Activated naive CD4-positive, alpha-beta T cell treated with anti-CD3 and anti-CD28 coated beads for 36 hours (primary cell): ENCODE measurements at regions of chr5 and their contacts with region 1.

Region 1: DNA sequence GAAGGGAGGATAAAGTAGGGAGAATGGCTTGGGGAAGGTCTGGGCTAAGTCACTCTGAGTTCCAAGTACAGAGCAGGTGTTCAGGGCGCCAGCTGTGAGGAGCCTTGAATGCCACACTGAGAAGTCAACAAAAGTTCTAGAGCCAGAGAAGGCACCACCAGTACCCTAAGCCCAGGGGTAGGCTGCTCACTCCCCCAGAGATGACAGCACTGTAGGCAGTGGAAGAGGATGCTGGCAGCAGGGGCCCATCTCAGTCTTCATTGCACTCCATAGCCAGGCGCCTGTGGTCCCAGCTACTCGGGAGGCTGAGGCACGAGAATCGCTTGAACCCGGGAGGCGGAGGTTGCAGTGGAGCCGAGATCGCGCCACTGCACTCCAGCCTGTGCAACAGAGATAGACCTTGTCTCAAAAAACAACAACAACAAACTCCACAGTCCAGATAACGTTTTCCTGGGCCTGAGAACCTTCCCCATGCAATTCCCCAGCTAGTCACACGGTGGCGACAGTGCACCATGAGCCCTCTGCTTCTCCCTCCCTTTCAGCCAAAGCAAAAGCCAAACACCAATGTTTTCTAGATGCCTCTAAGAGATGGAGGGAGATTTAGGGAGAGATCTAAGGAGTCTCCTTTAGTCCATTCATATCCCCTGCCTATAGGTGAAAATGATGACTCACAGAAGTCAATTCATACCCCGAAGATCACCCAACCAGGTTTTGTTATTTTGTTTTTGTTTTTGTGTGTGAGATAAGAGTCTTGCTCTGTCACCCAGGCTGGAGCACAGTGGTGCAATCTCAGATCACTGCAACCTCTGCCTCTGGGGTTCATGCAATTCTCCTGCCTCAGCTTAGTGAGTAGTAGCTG is 19.8 kb upstream of the NSD1 start:
- DNase-seq: peak; percentile 89
- H3K4me3 Mint-ChIP-seq: no peak overlapping the region
- H3K27ac Mint-ChIP-seq: no peak overlapping the region
- H3K4me1 Mint-ChIP-seq: peaks cover 20% of the 10 kb centered on the region
- H3K27me3 Mint-ChIP-seq: no peaks in the 10 kb centered on the region

Region 2: GRCh38 chr5:176810084-176810597 is 303.7 kb before region 1 on chr5 and contains the start of gene UNC5A:
- CTCF ChIA-PET with region 1: no interaction called
- intact Hi-C with region 1: loop called (anchors 5 kb)
- DNase-seq: peak; percentile 62
- H3K4me3 Mint-ChIP-seq: peak within 1 kb of the TSS; percentile 59
- H3K27ac Mint-ChIP-seq: no peak within 1 kb of the TSS
- H3K4me1 Mint-ChIP-seq: peaks cover 11% of the 10 kb centered on the region
- H3K27me3 Mint-ChIP-seq: peaks cover 64% of the 10 kb centered on the region
- total RNA-seq, gene UNC5A: not detected

Region 3: GRCh38 chr5:177099422-177100093 is 14.2 kb before region 1 on chr5:
- CTCF ChIA-PET with region 1: interaction called, 10 read pairs
- intact Hi-C with region 1: no loop called
- DNase-seq: no peak
- H3K4me3 Mint-ChIP-seq: no peak overlapping the region
- H3K27ac Mint-ChIP-seq: no peak overlapping the region
- H3K4me1 Mint-ChIP-seq: no peaks in the 10 kb centered on the region
- H3K27me3 Mint-ChIP-seq: no peaks in the 10 kb centered on the region

Region 4: GRCh38 chr5:177133091-177133852 is 19.5 kb after region 1 on chr5 and contains the start of gene NSD1:
- CTCF ChIA-PET with region 1: interaction called, 30 read pairs
- intact Hi-C with region 1: loop called (anchors 1 kb)
- DNase-seq: peak; percentile 90
- H3K4me3 Mint-ChIP-seq: peak within 1 kb of the TSS; percentile 88
- H3K27ac Mint-ChIP-seq: peak within 1 kb of the TSS; percentile 88
- H3K4me1 Mint-ChIP-seq: peaks cover 52% of the 10 kb centered on the region
- H3K27me3 Mint-ChIP-seq: no peaks in the 10 kb centered on the region
- total RNA-seq, gene NSD1: 50.2 to 51.7 TPM

Region 5: GRCh38 chr5:177311723-177312648 is 198.2 kb after region 1 on chr5 and contains the start of gene MXD3:
- CTCF ChIA-PET with region 1: interaction called, 34 read pairs
- intact Hi-C with region 1: no loop called
- DNase-seq: peak; percentile 99
- H3K4me3 Mint-ChIP-seq: peak within 1 kb of the TSS; percentile 97
- H3K27ac Mint-ChIP-seq: peak within 1 kb of the TSS; percentile 82
- H3K4me1 Mint-ChIP-seq: peaks cover 20% of the 10 kb centered on the region
- H3K27me3 Mint-ChIP-seq: peaks cover 3% of the 10 kb centered on the region
- total RNA-seq, gene MXD3: 45.0 to 51.7 TPM

Region 6: DNA sequence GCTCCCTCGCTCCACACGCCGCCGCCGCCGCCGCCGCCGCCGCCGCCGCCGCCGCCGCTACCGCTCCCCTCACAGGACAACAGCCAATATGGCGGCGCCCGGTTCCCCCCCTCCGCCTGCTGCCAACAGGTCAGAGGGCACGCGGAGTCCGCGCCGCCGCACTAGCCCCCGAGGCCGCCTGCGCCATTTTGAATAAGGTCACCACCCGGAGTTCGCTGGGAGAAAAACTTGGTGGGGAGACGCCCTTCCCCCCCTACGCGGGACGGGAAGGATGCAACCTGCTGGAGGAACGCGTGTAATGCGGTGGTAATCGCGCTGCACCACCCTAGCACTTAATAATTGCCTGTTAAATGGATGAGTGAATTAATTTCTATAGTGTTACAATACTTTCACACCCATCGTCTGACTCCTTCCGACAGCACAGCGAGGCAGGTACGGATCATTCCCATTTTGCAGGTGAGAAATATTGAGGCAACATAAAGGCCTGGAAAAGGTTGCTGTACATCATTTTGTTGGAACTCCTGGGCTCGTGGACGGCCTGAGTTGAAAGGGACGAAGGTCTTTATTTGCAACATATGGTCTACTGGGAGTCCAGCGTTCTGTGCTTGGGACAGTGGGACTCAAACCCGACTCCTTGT is 440.8 kb after region 1 on chr5 and contains the start of gene FAM193B:
- CTCF ChIA-PET with region 1: no interaction called
- intact Hi-C with region 1: no loop called
- DNase-seq: peak; percentile 97
- H3K4me3 Mint-ChIP-seq: peak within 1 kb of the TSS; percentile 80
- H3K27ac Mint-ChIP-seq: peak within 1 kb of the TSS; percentile 66
- H3K4me1 Mint-ChIP-seq: peaks cover 24% of the 10 kb centered on the region
- H3K27me3 Mint-ChIP-seq: no peaks in the 10 kb centered on the region
- total RNA-seq, gene FAM193B: 87.4 to 87.8 TPM